ENCODE measurements at regions of chr1 and their contacts with region 1.

Region 1: DNA sequence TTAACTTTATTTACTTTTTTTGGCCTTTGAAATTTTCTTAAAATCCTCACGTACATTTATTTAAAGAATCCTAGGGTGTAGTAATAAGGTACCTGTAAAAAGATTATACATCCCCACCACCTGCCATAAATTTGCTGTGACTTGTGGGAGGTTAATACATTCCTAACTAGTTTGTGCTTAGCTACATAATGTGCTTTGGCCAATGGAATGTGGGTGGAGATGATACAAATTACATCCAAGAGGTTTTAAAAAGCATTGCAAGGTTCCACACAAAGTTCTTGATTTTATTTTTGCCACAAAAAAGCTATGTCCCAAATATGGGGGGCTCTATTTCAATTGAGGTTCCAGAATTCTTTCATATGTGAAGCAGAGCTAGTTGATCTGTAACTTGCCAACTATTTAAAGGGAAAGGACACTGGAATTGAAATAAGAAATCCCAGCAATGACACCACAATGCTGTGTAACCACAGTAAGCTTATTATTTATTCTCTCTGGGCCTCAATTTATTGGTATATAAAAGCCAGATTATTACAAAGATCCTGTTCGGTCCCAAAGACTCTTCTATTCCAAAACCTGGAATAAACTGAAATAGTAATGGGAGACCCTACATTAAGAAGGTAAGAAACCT is 15.7 kb downstream of the ASPM start:
- DNase-seq: no peak
- H3K4me3 ChIP-seq: no peak overlapping the region
- H3K4me3 Mint-ChIP-seq: no peak overlapping the region
- H3K27ac Mint-ChIP-seq: no peak overlapping the region
- H3K4me1 ChIP-seq: peaks cover 14% of the 10 kb centered on the region
- H3K4me1 Mint-ChIP-seq: no peaks in the 10 kb centered on the region
- H3K27me3 ChIP-seq: no peaks in the 10 kb centered on the region
- H3K27me3 Mint-ChIP-seq: no peaks in the 10 kb centered on the region
- CTCF ChIP-seq: no peak

Region 2: DNA sequence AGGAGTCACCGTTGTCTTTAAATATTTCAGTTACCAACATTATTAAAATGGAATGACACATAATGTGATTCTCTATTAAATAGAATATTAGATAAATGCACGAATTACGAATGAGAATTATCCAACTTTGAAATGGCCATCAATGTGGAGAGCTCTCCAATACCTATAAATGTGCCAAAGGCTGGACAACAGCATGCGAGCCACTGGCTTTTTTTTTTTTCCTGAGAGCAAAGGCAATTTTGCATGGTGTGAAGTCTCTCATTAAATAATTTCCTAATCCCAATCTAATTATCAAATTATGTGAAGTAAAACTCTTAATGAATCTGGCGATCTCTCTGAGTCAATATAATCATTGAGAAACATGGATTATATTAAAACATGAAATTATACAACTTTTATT is 636.0 kb before region 1 on chr1:
- CTCF ChIA-PET with region 1: interaction called, 12 read pairs
- POLR2A ChIA-PET with region 1: no interaction called
- intact Hi-C with region 1: no loop called
- DNase-seq: no peak
- H3K4me3 ChIP-seq: no peak overlapping the region
- H3K4me3 Mint-ChIP-seq: no peak overlapping the region
- H3K27ac Mint-ChIP-seq: no peak overlapping the region
- H3K4me1 ChIP-seq: no peaks in the 10 kb centered on the region
- H3K4me1 Mint-ChIP-seq: no peaks in the 10 kb centered on the region
- H3K27me3 ChIP-seq: no peaks in the 10 kb centered on the region
- H3K27me3 Mint-ChIP-seq: no peaks in the 10 kb centered on the region
- CTCF ChIP-seq: no peak

Region 3: GRCh38 chr1:197146197-197146889 is 15.6 kb after region 1 on chr1 and contains the start of gene ASPM:
- CTCF ChIA-PET with region 1: no interaction called
- POLR2A ChIA-PET with region 1: interaction called, 11 read pairs
- intact Hi-C with region 1: no loop called
- DNase-seq: peak; percentile 95 to 96
- H3K4me3 ChIP-seq: peak within 1 kb of the TSS; percentile 58
- H3K4me3 Mint-ChIP-seq: peak within 1 kb of the TSS; percentile 96
- H3K27ac Mint-ChIP-seq: peak within 1 kb of the TSS; percentile 97
- H3K4me1 ChIP-seq: peaks cover 8% of the 10 kb centered on the region
- H3K4me1 Mint-ChIP-seq: peaks cover 5% of the 10 kb centered on the region
- H3K27me3 ChIP-seq: no peaks in the 10 kb centered on the region
- H3K27me3 Mint-ChIP-seq: no peaks in the 10 kb centered on the region
- CTCF ChIP-seq: no peak
- total RNA-seq, gene ASPM: 41.9 and 42.7 TPM in 2 replicates

Measured in Caco-2 (cell line).